ENCODE measurements at regions of chr1 and their contacts with region 1.

Region 1: GRCh38 chr1:88983791-88984559 is 8.5 kb downstream of the KYAT3 start:
- DNase-seq: no peak
- H3K4me3 Mint-ChIP-seq: peak overlapping the region; percentile 60
- H3K27ac Mint-ChIP-seq: peak overlapping the region; percentile 89
- H3K4me1 Mint-ChIP-seq: peaks cover 64% of the 10 kb centered on the region
- H3K27me3 Mint-ChIP-seq: no peaks in the 10 kb centered on the region
- CTCF ChIP-seq: peak; percentile 54

Region 2: DNA sequence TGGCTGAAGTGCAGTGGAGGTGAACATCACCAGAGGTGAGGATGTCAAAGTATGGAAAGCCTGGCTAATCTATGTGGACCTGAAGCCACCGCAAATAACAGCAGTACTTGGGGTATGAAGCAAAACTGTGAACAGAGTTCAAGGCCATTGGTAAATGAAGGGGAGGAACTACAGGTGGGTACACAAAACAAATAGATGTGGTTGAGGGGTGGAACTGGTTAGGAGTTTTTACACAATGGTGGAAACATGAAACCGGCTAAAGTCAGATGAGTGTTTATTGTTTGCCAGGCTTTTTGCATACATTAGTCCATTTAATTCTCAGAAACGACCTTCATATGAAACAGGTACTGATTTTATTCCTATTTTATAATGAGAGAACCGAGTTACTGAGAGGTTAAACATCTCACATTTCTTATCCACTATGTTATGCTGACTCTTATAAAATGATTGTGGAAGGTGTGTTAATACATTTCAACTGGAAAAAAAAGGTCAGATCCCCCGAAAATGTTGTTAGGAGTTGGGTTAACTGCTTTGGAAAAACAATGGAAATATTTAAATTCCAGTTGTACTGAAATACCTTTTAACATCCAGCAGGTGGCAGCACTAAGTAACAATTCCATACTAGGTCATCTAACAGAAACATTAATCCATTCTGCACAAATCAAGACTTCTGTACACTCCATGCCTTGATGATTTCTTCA is 48.3 kb before region 1 on chr1:
- CTCF ChIA-PET with region 1: no interaction called
- intact Hi-C with region 1: no loop called
- DNase-seq: peak; percentile 10
- H3K4me3 Mint-ChIP-seq: no peak overlapping the region
- H3K27ac Mint-ChIP-seq: no peak overlapping the region
- H3K4me1 Mint-ChIP-seq: no peaks in the 10 kb centered on the region
- H3K27me3 Mint-ChIP-seq: no peaks in the 10 kb centered on the region
- CTCF ChIP-seq: peak; percentile 29

Region 3: DNA sequence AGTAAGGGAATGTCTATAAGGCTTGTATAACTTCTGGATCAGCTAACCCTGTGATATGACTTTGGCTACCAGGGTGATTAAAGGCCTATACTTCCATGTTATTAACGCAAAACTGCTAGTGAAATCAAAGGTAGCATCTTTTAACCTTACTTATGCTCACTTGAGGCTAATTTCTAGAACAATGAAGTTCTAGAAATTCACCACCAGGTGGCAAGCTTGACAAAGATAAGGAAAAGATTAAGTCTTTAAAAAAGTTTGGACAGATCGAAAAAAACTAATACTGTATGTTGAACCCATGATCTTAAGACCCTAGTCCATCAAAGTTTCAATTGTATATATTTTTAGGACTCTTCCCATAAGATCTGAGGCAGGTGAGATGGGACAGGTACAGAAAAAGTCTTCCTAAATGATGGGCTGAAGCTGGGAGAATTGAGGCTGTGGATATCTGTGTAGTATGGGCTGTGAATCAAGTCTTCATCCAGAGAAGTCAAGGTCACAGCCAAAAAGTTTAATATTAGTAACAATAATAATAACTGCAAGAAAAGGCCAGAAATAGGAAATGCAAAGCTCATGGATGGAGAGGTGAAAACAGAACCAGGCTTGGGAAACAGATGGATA is 10.3 kb before region 1 on chr1:
- CTCF ChIA-PET with region 1: interaction called, 11 read pairs
- intact Hi-C with region 1: no loop called
- DNase-seq: no peak
- H3K4me3 Mint-ChIP-seq: no peak overlapping the region
- H3K27ac Mint-ChIP-seq: no peak overlapping the region
- H3K4me1 Mint-ChIP-seq: peaks cover 9% of the 10 kb centered on the region
- H3K27me3 Mint-ChIP-seq: no peaks in the 10 kb centered on the region
- CTCF ChIP-seq: peak; percentile 63

Region 4: DNA sequence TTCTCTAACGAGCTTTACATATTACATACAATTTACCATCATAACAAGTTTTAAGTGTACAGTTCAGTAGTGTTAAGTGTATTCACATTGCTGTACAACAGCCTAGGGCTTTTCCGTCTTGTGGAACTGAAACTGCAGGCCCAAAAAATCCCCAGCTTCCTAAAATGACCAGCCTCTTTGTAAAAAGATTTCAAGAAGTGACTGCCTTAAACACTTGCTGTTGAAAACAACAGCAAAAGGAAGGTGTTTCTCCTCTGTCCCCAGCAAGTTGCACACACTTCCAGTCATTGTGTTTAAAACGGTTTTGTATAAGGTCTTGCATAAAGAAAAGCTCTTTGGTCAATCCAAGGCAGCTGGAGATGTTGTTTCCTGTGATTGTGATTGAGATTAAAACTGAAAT is 97.0 kb after region 1 on chr1:
- CTCF ChIA-PET with region 1: no interaction called
- intact Hi-C with region 1: no loop called
- DNase-seq: no peak
- H3K4me3 Mint-ChIP-seq: no peak overlapping the region
- H3K27ac Mint-ChIP-seq: no peak overlapping the region
- H3K4me1 Mint-ChIP-seq: peaks cover 5% of the 10 kb centered on the region
- H3K27me3 Mint-ChIP-seq: no peaks in the 10 kb centered on the region
- CTCF ChIP-seq: no peak

Region 5: GRCh38 chr1:89100412-89100811 is 116.4 kb after region 1 on chr1:
- CTCF ChIA-PET with region 1: no interaction called
- intact Hi-C with region 1: no loop called
- DNase-seq: no peak
- H3K4me3 Mint-ChIP-seq: no peak overlapping the region
- H3K27ac Mint-ChIP-seq: no peak overlapping the region
- H3K4me1 Mint-ChIP-seq: no peaks in the 10 kb centered on the region
- H3K27me3 Mint-ChIP-seq: no peaks in the 10 kb centered on the region
- CTCF ChIP-seq: no peak

Region 6: GRCh38 chr1:89407360-89407759 is 423.4 kb after region 1 on chr1:
- CTCF ChIA-PET with region 1: no interaction called
- intact Hi-C with region 1: no loop called
- DNase-seq: no peak
- H3K4me3 Mint-ChIP-seq: no peak overlapping the region
- H3K27ac Mint-ChIP-seq: no peak overlapping the region
- H3K4me1 Mint-ChIP-seq: no peaks in the 10 kb centered on the region
- H3K27me3 Mint-ChIP-seq: peaks cover 13% of the 10 kb centered on the region
- CTCF ChIP-seq: no peak